ENCODE measurements at regions of chr14 and their contacts with region 1.

Region 1: DNA sequence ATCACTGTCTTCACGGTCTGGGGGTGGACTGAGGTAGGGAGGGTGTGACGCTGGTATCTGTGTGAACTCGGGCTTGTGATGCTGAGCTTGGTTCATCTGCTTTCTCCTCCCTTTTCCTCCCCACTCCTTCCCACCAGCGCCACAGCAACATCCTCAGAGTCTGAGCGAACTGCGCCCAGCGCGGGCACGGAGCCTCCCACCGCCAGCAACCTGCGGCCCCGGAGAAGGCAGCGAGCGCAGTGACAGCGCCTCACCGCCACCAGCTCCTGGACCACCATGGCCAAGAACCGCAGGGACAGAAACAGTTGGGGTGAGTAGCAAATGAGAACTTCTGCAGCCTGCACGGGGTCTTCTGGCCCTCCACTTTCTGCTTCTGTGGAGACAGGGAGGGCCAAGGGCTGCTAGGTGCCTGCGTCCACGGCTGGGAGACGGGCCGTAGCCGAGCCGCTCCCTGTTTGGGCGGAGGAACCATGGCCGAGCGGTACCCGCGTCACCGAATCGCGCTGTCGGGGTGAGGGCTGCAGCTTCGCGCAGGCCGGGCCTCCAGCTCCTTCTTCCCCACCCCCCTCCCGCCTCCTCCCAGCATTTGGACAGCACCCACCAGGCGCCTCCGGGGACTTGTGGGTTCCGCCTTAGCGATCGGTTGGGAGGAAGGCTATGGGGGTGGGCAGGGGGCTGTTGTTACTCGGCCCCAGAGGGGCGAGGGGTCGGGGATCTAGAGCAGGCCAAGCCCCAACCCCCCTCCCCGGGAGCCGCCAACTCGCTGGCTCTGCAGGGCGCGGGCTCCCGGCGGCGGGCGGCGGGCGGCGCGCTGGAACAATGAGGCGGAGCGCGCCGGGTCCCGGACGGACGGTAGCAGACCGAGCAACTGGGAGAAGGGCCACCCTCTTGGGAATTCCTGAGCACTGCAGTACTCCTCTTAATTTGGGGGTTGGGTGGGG is at the start of gene ATL1:
- DNase-seq: peak; percentile 56 to 93 (median 83)

Region 2: DNA sequence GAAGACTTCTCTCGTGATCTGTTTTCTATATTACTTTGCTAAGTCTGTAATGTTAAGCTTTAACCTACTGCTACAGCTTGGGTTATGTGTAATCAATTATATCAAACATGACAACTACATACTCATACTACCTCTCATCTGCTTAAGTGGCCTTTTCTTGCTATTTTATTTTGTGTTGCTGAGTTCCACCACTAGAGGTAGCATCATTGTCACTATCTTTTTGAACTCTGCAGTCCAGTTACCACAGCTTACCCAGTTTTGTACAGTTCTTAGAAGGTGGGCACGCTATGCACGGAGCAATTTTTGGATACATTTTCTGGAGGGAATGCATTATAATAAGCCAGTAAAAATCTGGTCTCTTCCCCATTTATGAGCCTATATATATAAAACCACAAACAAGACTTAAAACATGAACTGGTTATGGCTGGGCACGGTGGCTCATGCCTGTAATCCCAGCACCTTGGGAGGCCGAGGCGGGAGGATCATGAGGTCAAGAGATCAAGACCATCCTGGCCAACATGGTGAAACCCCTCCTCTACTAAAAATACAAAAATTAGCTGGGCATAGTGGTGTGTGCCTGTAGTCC is 59.4 kb after region 1 on chr14:
- intact Hi-C with region 1: loop called (anchors 10 kb)
- DNase-seq: peak in 2 of 42 donors; percentile 27 to 49

Region 3: DNA sequence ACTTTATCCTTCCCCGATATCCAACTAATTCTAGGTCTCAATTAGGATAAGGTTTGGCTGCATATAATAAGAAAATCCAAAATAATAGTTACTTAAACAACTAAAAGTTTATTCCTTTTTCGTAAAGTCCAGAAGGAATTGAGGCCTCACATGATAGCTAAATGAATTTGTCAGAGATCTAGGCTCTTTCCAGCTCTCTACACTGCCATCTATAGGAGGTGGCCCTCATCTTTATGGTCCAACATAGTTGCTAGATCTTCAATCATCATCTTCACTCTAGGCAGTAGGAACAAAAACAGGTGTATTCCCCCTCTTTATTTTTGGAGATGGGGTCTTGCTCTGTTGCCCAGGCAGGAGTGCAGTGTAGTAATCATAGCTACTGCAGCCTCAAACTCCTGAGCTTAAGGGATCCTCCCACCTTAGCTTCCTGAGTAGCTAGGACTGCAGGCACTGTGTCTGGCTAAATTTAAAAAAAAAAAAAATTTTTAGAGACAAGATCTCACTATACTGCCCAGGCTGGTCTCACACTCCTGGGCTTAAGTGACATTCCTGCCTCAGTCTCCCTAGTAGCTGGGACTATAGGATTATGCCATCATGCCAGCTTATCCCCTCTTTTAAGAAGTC is 154.3 kb after region 1 on chr14:
- intact Hi-C with region 1: no loop called
- DNase-seq: peak in 12 of 42 donors; percentile 22 to 67 (median 38)